Activated CD4-positive, alpha-beta T cell treated with anti-CD3 and anti-CD28 coated beads, Interleukin-2, amount 10 ng/mL, durations not matched to agents 24 days and 14 days (primary cell): ENCODE measurements at regions of chr22 and their contacts with region 1.

Region 1: GRCh38 chr22:37933711-37934376 is 19.6 kb downstream of the C22orf23 start:
- DNase-seq: peak; percentile 96
- H3K4me3 Mint-ChIP-seq: no peak overlapping the region
- H3K27ac Mint-ChIP-seq: peak overlapping the region; percentile 51
- H3K4me1 Mint-ChIP-seq: peaks cover 9% of the 10 kb centered on the region
- H3K27me3 Mint-ChIP-seq: no peaks in the 10 kb centered on the region

Region 2: DNA sequence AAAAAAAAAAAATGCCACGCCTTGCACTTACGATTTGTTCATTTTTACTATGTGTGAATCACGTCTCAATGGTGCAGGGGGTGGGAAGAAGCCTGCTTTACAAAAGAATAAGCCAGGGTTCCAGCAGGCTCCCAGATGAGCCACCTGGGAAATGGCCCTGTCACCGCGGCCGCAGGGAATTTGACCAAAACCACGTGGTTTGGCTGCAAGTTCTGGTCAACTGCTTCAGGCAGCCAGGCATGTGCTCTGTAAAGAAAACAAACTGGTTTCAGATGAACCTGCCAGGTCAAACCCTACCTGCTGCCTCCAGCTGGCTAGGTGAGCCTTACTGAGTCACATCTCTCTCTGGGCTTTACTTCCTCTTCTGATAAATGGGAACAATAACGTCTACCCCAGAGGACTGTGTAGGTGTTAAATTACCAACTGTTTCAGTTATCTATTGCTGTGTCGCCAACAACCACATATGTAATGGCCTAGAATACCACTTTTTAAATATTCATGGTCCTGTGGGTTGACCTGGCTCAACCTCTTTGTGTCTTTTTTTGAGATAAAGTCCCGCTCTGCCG is 156.6 kb before region 1 on chr22:
- intact Hi-C with region 1: no loop called
- DNase-seq: no peak
- H3K4me3 Mint-ChIP-seq: no peak overlapping the region
- H3K27ac Mint-ChIP-seq: no peak overlapping the region
- H3K4me1 Mint-ChIP-seq: no peaks in the 10 kb centered on the region
- H3K27me3 Mint-ChIP-seq: no peaks in the 10 kb centered on the region

Region 3: DNA sequence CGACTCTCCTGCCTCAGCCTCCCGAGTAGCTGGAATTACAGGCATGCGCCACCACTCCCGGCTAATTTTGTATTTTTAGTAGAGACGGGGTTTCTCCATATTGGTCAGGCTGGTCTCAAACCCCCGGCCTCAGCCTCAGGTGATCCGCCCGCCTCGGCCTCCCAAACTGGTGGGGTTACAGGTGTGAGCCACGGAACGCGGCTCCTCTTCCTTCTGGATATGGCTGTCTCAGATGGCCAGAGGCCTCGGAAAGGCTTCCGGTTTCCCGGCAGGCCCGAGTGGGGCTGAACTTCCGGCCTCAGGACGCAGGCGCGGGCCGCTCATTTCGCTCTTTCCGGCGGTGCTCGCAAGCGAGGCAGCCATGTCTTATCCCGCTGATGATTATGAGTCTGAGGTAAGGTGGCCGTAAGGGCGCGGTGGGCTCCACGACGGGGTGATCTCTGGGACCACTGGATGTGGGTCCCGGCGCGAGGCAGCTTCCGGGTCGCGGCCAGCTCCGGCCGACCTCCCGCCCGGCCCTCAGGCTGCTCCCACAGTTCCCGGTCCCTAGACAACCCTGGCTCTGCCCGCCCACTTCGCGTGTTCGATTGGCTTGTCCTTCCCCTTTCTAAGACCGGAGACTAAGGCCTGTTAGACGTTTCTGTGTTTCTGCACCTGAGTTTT is 84.6 kb before region 1 on chr22 and contains the start of gene EIF3L:
- intact Hi-C with region 1: loop called (anchors 1 kb)
- DNase-seq: peak; percentile 97
- H3K4me3 Mint-ChIP-seq: peak within 1 kb of the TSS; percentile 98
- H3K27ac Mint-ChIP-seq: peak within 1 kb of the TSS; percentile 97
- H3K4me1 Mint-ChIP-seq: peaks cover 41% of the 10 kb centered on the region
- H3K27me3 Mint-ChIP-seq: no peaks in the 10 kb centered on the region
- total RNA-seq, gene EIF3L: 460 and 480 TPM in 2 replicates

Region 4: DNA sequence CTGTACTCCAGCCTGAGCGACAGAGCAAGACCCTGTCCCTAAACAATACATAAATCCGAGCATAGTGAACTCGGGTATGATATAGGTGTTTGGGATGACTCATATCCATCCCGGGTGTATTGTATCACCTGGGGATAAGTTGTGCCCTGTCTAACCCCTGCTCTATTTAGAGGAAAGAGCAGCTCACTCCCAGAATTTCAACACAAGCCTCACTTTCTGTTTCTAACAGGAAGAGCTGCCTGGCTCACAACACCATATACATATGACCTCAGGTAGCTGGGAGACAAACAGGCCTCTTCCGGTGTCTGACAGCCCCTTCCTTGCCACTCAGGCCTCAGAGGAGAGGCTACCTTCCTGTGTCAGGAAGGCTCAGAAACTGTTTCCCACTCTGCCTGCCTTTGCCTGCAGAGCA is 37.7 kb before region 1 on chr22:
- intact Hi-C with region 1: loop called (anchors 5 kb)
- DNase-seq: peak; percentile 89
- H3K4me3 Mint-ChIP-seq: peak overlapping the region; percentile 53
- H3K27ac Mint-ChIP-seq: peak overlapping the region; percentile 91
- H3K4me1 Mint-ChIP-seq: peaks cover 33% of the 10 kb centered on the region
- H3K27me3 Mint-ChIP-seq: no peaks in the 10 kb centered on the region

Region 5: DNA sequence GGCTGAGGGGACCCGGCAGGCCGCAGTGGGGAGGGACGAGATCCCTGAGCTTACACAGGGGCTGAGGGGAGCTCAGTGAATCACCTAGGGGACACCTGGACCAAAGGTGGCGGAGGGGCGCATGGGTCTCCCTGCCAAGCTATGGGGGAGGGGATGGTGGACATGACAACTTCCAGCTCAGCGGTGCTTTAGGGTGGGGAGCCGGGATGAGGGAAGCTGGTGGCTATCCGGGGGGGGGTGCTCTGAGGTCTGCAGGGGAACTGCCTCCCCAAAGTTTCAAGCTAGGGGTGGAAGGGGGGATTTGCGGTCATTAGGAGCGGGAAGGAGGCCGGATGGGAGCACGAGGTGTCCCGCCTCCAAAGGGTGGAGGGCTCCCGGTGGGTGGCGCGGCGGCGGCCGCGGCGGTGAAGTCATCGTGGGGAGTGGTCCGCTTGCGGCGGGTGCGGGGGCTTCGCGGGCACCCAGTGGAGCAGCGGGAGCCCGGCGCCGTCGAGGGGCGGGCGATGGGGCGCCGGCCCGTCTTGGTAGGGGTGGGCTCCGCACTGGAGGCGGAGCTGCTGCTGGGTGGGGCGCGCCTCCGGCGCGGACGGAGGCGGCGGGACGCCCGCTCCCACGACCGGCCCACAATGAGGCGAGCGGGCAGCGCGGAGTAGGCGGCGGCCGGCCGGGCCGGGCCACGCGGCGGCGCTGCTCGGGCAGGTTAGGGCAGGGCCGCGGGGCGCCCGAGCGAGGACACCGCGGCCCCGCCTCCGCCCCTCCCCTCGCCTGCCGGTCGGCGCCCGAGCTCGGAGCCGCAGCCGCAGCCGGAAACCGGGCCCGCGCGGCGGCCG is 28.1 kb before region 1 on chr22 and contains the start of gene MICALL1:
- intact Hi-C with region 1: loop called (anchors 2 kb)
- DNase-seq: peak; percentile 93
- H3K4me3 Mint-ChIP-seq: peak within 1 kb of the TSS; percentile 79
- H3K27ac Mint-ChIP-seq: peak within 1 kb of the TSS; percentile 81
- H3K4me1 Mint-ChIP-seq: peaks cover 26% of the 10 kb centered on the region
- H3K27me3 Mint-ChIP-seq: no peaks in the 10 kb centered on the region
- total RNA-seq, gene MICALL1: 27.3 and 27.7 TPM in 2 replicates